ENCODE measurements at regions of chr1 and their contacts with region 1.

Region 1: GRCh38 chr1:210239349-210240111 is 6.9 kb downstream of the SERTAD4 start:
- DNase-seq: no peak
- ATAC-seq: no peak

Region 2: GRCh38 chr1:210024996-210025395 is 214.5 kb before region 1 on chr1:
- intact Hi-C with region 1: no loop called
- DNase-seq: no peak
- ATAC-seq: no peak

Region 3: DNA sequence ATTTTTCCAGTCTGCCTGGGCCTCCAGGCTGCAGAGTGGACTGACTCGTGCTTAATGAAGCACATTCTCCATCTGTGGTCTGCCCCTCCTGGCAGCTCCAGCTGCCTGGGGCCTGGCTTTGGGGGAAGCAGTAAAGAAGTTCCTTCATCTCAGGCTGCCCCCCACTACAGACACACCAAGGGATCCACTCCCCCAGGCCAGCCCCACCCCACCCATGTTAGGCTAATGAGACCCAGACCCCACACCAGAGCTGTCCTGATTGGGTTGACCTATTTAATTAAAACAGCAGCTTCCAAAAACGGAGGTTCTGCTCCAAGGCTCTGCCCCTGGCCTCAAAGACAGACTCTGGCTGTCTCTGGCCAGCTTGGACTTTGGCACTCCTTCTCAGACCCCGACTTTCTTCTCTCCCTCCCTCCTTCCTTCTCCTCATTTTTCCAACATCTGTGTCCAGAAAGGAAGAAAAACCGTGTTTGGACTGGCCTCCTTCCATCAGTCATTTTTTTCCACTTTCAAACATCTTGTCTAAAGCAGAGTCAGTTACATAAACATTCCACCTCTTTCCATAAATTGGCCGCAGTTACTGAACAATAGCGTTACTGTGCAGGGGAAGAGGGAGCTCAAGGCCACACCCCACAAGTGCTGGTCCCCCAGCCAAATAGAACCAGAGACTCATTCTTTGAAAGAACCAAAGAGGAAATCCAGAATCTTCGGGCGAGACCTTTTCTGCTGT is 22.8 kb after region 1 on chr1:
- intact Hi-C with region 1: no loop called
- DNase-seq: no peak
- ATAC-seq: peak; percentile 89

Region 4: GRCh38 chr1:210292231-210292871 is 52.8 kb after region 1 on chr1:
- intact Hi-C with region 1: loop called (anchors 5 kb)
- DNase-seq: peak; percentile 66
- ATAC-seq: peak; percentile 40